ENCODE measurements at regions of chr21 and their contacts with region 1.

Region 1: GRCh38 chr21:25421327-25422028 is 185.8 kb downstream of the MRPL39 start:
- DNase-seq: no peak
- ATAC-seq: peak; percentile 81
- H3K4me3 Mint-ChIP-seq: peak overlapping the region; percentile 68
- H3K27ac Mint-ChIP-seq: peak overlapping the region; percentile 91
- H3K4me1 Mint-ChIP-seq: peaks cover 63% of the 10 kb centered on the region
- H3K27me3 Mint-ChIP-seq: no peaks in the 10 kb centered on the region
- CTCF ChIP-seq: peak; percentile 65

Region 2: GRCh38 chr21:25457411-25457810 is 35.9 kb after region 1 on chr21:
- CTCF ChIA-PET with region 1: no interaction called
- POLR2A ChIA-PET with region 1: interaction called, 10 read pairs
- intact Hi-C with region 1: loop called (anchors 1 kb)
- DNase-seq: no peak
- ATAC-seq: peak; percentile 65
- H3K4me3 Mint-ChIP-seq: peak overlapping the region; percentile 65
- H3K27ac Mint-ChIP-seq: peak overlapping the region; percentile 87
- H3K4me1 Mint-ChIP-seq: peaks cover 66% of the 10 kb centered on the region
- H3K27me3 Mint-ChIP-seq: no peaks in the 10 kb centered on the region
- CTCF ChIP-seq: no peak

Region 3: GRCh38 chr21:25561668-25562641 is 140.5 kb after region 1 on chr21:
- CTCF ChIA-PET with region 1: interaction called, 18 read pairs
- POLR2A ChIA-PET with region 1: interaction called, 157 read pairs
- intact Hi-C with region 1: loop called (anchors 1 kb)
- DNase-seq: peak; percentile 73
- ATAC-seq: peak; percentile 70
- H3K4me3 Mint-ChIP-seq: peak overlapping the region; percentile 92
- H3K27ac Mint-ChIP-seq: peak overlapping the region; percentile 95
- H3K4me1 Mint-ChIP-seq: peaks cover 60% of the 10 kb centered on the region
- H3K27me3 Mint-ChIP-seq: no peaks in the 10 kb centered on the region
- CTCF ChIP-seq: no peak

Region 4: DNA sequence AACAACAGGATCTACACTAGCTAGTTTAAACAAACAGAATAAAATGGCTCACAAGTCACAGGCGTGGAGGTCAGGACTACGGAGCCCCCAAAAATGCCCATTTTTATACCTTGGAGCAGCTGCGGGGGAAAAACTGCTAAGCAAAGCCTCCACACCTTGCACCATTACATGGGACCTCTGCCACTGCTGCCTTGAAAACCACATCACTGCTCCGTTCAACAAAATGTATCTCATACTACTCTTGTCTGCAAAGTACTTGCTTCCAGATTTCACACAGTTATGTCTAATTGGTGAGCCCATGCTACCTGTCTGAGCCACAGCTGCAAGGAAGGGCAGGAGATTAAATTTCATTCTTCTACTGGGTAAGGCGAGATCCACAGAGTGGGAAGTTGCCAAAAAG is 161.4 kb after region 1 on chr21:
- CTCF ChIA-PET with region 1: interaction called, 4 read pairs
- POLR2A ChIA-PET with region 1: interaction called, 157 read pairs
- intact Hi-C with region 1: loop called (anchors 1 kb)
- DNase-seq: no peak
- ATAC-seq: peak; percentile 13
- H3K4me3 Mint-ChIP-seq: no peak overlapping the region
- H3K27ac Mint-ChIP-seq: peak overlapping the region; percentile 76
- H3K4me1 Mint-ChIP-seq: peaks cover 40% of the 10 kb centered on the region
- H3K27me3 Mint-ChIP-seq: no peaks in the 10 kb centered on the region
- CTCF ChIP-seq: no peak

Region 5: DNA sequence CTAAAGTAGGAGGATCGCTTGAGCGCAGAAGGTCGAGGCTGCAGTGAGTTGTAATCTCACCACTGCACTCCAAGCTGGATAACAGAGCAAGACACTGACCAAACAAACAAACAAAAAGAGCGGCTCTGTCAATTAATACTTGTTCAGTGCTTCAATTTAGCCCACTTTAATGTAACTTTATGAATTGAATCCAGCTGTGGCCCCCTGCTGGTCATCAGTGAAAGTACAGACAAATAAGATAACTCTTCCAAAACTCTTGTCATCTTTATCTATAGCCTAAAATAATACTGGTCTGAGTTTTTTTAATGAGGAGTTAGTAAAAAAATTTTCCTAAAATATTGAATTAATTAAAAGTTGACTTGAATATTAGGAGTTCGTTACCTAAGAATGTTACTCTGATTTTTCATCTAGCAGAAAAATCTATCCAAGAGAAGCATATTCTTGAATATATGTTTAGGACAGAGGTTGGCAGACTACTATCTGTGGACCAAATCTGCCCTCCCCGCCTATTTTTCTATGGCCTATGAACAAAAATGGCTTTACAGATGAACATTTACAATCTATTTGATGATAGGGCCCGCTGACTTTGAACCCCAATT is 287.1 kb after region 1 on chr21:
- CTCF ChIA-PET with region 1: no interaction called
- POLR2A ChIA-PET with region 1: no interaction called
- intact Hi-C with region 1: loop called (anchors 1 kb)
- DNase-seq: no peak
- ATAC-seq: peak; percentile 34
- H3K4me3 Mint-ChIP-seq: no peak overlapping the region
- H3K27ac Mint-ChIP-seq: no peak overlapping the region
- H3K4me1 Mint-ChIP-seq: no peaks in the 10 kb centered on the region
- H3K27me3 Mint-ChIP-seq: no peaks in the 10 kb centered on the region
- CTCF ChIP-seq: peak; percentile 94

Region 6: DNA sequence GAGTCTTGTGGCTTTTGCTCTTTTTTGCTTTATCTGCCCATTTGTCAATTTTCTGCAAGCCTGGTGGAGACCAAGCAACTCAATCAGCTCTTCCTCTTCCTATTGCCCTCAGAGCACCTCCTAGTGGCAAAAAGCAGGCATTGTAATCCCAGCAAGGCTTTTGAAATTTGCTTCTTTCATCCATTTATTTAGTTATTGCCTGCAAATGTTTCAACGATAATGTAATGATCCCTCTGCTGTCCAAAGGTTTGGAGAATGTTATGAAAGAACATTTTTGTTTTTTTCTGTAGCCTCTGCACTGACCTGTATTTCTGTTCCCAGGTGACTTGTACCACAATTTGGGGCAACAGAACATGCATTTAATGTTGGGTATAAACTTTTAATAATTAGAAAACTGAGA is 441.1 kb after region 1 on chr21:
- CTCF ChIA-PET with region 1: no interaction called
- POLR2A ChIA-PET with region 1: no interaction called
- intact Hi-C with region 1: loop called (anchors 5 kb)
- DNase-seq: no peak
- ATAC-seq: peak; percentile 45
- H3K4me3 Mint-ChIP-seq: no peak overlapping the region
- H3K27ac Mint-ChIP-seq: no peak overlapping the region
- H3K4me1 Mint-ChIP-seq: no peaks in the 10 kb centered on the region
- H3K27me3 Mint-ChIP-seq: no peaks in the 10 kb centered on the region
- CTCF ChIP-seq: peak; percentile 62

Measured in activated B cell treated with CpG ODN at 0.5 μM for 24 hours (primary cell).